ENCODE measurements at regions of chr13 and their contacts with region 1.

Region 1: GRCh38 chr13:36639610-36640009 is 34.2 kb upstream of the SERTM1 start:
- DNase-seq: no peak
- H3K4me3 ChIP-seq: no peak overlapping the region
- H3K27ac ChIP-seq: no peak overlapping the region
- H3K4me1 ChIP-seq: no peaks in the 10 kb centered on the region
- H3K27me3 ChIP-seq: no peaks in the 10 kb centered on the region
- CTCF ChIP-seq: no peak
- POLR2A ChIP-seq: no peak

Region 2: DNA sequence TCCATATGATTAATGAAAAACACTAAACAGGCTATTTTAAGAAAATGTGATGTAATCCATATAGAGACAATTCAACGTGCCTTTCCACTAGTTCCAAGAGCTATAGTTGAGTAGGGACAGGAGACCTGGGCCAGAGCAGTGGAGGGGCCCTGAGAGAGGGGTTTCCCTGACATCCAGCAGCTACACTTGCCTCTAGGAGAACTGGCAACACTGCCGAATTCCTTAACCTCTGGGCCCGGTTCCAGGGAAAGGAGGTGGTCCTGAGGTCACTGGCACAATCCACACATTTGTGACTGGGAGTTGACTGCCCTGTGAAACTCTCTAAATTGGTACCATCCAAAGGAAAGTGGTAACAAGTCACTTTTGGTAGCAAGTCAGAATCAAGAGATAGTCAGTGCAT is 772.8 kb before region 1 on chr13:
- intact Hi-C with region 1: no loop called
- DNase-seq: no peak
- H3K4me3 ChIP-seq: no peak overlapping the region
- H3K27ac ChIP-seq: no peak overlapping the region
- H3K4me1 ChIP-seq: no peaks in the 10 kb centered on the region
- H3K27me3 ChIP-seq: no peaks in the 10 kb centered on the region
- CTCF ChIP-seq: no peak
- POLR2A ChIP-seq: no peak

Region 3: GRCh38 chr13:36582977-36583376 is 56.6 kb before region 1 on chr13:
- intact Hi-C with region 1: loop called (anchors 2 kb)
- DNase-seq: no peak
- H3K4me3 ChIP-seq: no peak overlapping the region
- H3K27ac ChIP-seq: no peak overlapping the region
- H3K4me1 ChIP-seq: no peaks in the 10 kb centered on the region
- H3K27me3 ChIP-seq: no peaks in the 10 kb centered on the region
- CTCF ChIP-seq: no peak
- POLR2A ChIP-seq: no peak

Region 4: DNA sequence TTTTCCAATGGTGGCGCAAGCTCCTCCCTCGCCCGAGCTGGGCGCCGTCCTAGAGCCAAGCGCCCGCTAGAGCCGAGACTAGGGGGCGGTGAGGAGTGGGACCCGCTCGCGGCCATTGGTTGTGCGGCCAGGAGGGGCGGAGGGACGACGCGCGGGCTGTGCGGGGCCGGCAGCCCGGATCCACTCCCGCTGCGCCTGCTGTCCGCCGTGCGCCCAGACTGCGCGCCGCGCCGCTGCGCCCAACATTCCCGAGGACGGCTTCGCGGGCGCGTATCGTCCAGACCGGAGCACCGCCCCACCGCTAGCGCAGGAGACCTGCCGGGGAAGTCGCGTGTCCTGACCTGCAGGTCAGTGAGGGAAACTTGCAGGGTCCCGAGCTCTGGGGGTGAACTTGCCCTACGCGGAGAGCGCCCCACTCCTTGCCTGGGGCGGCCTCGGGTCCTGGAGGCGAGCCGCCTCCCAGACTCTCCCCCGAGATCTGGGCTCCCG is 34.3 kb after region 1 on chr13 and contains the start of gene SERTM1:
- intact Hi-C with region 1: loop called (anchors 1 kb)
- DNase-seq: no peak
- H3K4me3 ChIP-seq: peak within 1 kb of the TSS; percentile 36 to 63 (median 49)
- H3K27ac ChIP-seq: no peak within 1 kb of the TSS
- H3K4me1 ChIP-seq: no peaks in the 10 kb centered on the region
- H3K27me3 ChIP-seq: peaks cover 0 to 33% of the 10 kb centered on the region in 2 donors
- CTCF ChIP-seq: no peak
- POLR2A ChIP-seq: no peak
- total RNA-seq, gene SERTM1: 0.16 to 7.6 TPM in 2 of 3 donors, not detected in the other

Measured in breast epithelium (tissue), 4 donors.